Heart right ventricle (tissue), 16 donors: ENCODE measurements at regions of chr14 and their contacts with region 1.

Region 1: DNA sequence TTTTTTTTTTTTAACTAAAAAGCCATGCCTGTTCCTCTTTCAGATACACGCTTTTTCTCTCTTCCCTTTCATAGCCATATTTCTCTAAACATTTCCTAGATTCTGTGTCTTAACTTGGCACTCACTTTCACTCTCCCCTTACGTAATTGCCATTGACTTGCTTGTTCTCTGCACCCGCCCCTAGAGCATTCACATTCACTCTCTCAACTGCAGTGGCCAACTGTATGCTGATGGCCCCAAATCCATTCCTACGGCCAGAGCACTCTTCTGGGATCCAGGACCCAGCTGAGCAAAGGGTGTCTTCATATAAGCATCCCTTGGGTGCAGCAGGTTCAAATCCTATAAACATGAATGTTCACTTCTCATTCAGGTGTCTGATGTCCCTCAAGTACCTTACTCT is 59.5 kb downstream of the CKB start:
- DNase-seq: no peak
- ATAC-seq: no peak
- H3K4me3 ChIP-seq: no peak overlapping the region
- H3K27ac ChIP-seq: no peak overlapping the region
- H3K4me1 ChIP-seq: no peaks in the 10 kb centered on the region
- H3K27me3 ChIP-seq: no peaks in the 10 kb centered on the region
- CTCF ChIP-seq: no peak

Region 2: DNA sequence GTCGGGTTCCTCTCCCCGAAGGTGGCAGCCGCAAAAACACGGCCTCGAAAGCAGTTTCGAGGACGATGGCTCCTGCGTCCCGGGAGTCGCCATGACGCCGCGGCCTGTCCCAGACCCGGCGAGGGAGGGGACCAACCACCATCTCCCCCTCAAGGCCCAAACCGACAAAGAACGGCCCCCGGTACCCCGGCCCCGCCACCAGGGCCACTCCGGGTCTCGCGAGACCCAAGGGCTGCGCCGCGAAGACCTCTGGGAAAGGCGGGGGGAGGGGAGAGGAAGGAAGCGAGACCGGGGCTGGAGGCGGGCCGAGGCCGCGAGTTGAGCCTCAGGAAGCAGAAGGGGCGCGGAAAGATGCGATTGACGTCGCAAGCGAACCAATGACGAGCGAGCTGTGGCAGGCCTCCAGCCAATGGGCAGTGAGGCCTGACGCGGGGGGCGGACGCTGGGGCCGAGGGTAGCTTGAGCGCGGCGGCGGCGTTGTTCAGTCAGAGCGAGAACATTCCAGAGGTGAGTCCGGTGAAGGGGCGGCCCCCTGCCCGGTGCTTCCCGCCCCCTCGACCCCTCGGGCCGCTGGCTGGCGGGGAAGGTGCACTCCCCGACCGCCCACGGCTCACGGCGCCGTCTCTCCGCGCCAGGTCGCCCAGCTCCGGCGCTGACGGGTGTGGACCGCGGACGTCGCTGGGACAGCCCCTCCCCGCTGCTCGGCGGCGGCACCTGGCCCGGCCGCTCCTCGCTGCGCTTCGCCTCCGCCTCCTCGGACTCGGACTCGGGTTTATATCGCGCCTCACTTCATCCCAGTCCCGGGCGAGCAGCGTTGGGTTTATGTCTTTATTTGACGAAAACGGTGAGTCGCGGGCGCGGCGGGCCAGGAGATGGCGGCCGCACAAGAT is 129.2 kb before region 1 on chr14 and contains the start of gene EIF5:
- intact Hi-C with region 1: loop called in 2 of 10 experiments (anchors 10 kb)
- DNase-seq: peak; percentile 98 to 100
- ATAC-seq: peak; percentile 95 to 99 (median 97)
- H3K4me3 ChIP-seq: peak within 1 kb of the TSS; percentile 70 to 98 (median 92)
- H3K27ac ChIP-seq: peak within 1 kb of the TSS; percentile 97 to 100 (median 100)
- H3K4me1 ChIP-seq: peaks cover 7 to 46% (median 33%) of the 10 kb centered on the region in 9 donors
- H3K27me3 ChIP-seq: no peaks in the 10 kb centered on the region
- CTCF ChIP-seq: peak in 4 of 9 donors; percentile 20 to 39 (median 24)
- total RNA-seq, gene EIF5: 163 to 323 (median 243) TPM

Region 3: DNA sequence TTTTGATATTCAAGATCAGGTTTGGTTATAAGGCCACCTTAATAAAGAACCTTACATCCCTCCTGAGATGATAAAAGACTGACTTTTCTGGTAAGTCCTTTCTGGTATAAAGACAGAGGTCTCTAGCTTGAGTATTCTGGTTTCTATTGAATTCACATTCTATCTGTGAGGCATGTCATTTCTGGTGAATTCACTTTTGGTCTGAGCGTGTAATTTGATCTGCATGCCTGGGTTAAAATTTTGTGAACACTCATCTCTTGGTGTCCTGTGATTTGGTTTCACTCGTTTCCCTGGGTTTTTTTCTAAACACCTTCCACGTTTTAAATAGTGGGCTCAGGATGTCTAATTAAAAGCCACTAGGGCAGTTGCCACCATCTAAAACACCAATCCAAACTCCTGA is 116.9 kb before region 1 on chr14:
- intact Hi-C with region 1: loop called in 1 of 10 experiments (anchors 10 kb)
- DNase-seq: no peak
- ATAC-seq: peak in 1 of 8 donors; percentile 7
- H3K4me3 ChIP-seq: no peak overlapping the region
- H3K27ac ChIP-seq: no peak overlapping the region
- H3K4me1 ChIP-seq: peaks cover 0 to 7% (median 0%) of the 10 kb centered on the region in 9 donors
- H3K27me3 ChIP-seq: no peaks in the 10 kb centered on the region
- CTCF ChIP-seq: no peak

Region 4: GRCh38 chr14:103512701-103513611 is 49.8 kb after region 1 on chr14:
- intact Hi-C with region 1: no loop called
- DNase-seq: peak in 1 of 2 donors; percentile 67
- ATAC-seq: peak; percentile 57 to 78 (median 72)
- H3K4me3 ChIP-seq: no peak overlapping the region
- H3K27ac ChIP-seq: peak overlapping the region; percentile 46 to 84 (median 65)
- H3K4me1 ChIP-seq: peaks cover 8 to 50% (median 31%) of the 10 kb centered on the region in 9 donors
- H3K27me3 ChIP-seq: no peaks in the 10 kb centered on the region
- CTCF ChIP-seq: peak in 2 of 9 donors; percentile 15 to 18